Activated naive CD8-positive, alpha-beta T cell treated with anti-CD3 and anti-CD28 coated beads, Interleukin-2, amount 10 ng/mL, durations not matched to agents 7 days and 5 days (primary cell): ENCODE measurements at regions of chr9 and their contacts with region 1.

Region 1: GRCh38 chr9:137240861-137241489 is at the start of gene TUBB4B:
- DNase-seq: peak; percentile 99
- ATAC-seq: peak; percentile 83
- H3K4me3 Mint-ChIP-seq: peak within 1 kb of the TSS; percentile 90
- H3K27ac Mint-ChIP-seq: peak within 1 kb of the TSS; percentile 93
- H3K4me1 Mint-ChIP-seq: peaks cover 24% of the 10 kb centered on the region
- H3K27me3 Mint-ChIP-seq: no peaks in the 10 kb centered on the region
- total RNA-seq, gene TUBB4B: 241 to 249 TPM

Region 2: DNA sequence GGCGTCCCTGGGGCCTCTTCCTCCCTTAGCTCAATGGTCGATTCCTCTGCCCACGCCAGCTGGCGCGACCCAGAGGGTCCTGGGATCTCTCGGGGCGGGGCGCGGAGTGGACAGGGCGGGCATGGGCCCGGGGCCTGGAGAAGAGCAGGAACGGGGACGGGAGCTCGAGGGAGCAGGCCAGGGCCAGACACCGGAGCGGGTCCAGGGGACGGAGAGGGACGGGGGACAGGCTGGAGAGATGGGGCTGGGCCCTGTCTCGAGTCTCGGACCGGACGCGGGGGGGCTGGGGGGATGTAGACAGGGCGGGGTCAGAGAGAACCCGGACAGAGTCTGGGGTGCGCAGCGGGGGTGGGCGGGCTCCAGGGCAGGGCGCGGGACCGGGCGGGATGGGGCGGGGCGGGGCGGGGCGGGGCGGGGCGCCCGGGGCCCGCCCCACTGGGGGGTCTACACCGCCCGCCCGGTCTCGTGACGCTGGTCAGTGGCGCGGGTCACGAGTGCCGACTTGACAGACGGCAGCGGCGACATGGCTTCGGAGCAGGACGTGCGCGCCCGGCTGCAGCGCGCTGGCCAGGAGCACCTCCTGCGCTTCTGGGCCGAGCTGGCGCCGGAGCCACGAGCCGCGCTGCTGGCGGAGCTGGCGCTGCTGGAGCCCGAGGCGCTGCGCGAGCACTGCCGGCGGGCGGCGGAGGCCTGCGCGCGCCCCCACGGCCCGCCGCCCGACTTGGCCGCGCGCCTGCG is 163.8 kb before region 1 on chr9 and contains the start of gene UAP1L1:
- POLR2A ChIA-PET with region 1: interaction called, 11 read pairs
- DNase-seq: peak; percentile 81
- ATAC-seq: peak; percentile 70
- H3K4me3 Mint-ChIP-seq: peak within 1 kb of the TSS; percentile 79
- H3K27ac Mint-ChIP-seq: peak within 1 kb of the TSS; percentile 86
- H3K4me1 Mint-ChIP-seq: peaks cover 5% of the 10 kb centered on the region
- H3K27me3 Mint-ChIP-seq: no peaks in the 10 kb centered on the region
- total RNA-seq, gene UAP1L1: 43.9 to 44.1 TPM

Region 3: DNA sequence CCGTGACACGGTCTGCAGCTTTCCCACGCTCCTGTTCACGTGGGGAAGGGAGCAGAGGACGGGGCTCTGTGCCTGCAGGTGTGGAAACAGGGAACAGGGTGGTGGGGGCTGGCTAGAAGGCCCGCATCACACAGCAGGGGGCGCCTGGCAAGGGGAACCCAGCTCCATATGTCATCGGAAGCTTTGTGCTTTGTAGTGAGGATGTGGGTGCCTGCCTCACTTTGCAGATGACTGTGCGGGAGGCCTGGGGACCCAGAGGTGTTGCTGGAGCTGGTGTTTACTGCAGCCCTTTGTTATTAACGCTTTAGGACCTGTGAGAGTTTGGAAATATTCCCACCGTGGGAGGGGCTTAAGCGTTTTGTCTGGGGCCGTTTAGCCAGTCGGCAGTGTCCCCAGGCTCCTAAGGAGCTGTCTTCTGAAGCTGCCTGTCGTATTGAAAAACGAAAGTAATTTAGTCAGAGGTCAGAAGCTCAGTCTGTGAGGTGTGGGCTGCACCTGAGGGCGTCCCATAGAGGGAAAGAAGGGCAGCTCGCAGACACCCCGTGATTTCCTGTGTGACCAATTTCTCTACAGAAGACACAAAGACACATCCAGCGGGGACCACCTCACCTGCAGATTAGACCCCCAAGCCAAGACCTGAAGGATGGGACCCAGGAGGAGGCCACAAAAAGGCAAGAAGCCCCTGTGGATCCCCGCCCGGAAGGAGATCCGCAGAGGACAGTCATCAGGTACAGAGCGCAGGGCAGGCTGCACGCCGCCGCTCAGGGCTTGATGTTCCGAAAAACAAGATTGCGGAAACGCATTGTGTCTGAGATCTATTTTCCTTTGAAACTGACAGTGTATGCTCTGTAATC is 145.1 kb before region 1 on chr9:
- POLR2A ChIA-PET with region 1: interaction called, 20 read pairs
- DNase-seq: peak; percentile 87
- ATAC-seq: peak; percentile 99
- H3K4me3 Mint-ChIP-seq: peak overlapping the region; percentile 85
- H3K27ac Mint-ChIP-seq: peak overlapping the region; percentile 96
- H3K4me1 Mint-ChIP-seq: peaks cover 16% of the 10 kb centered on the region
- H3K27me3 Mint-ChIP-seq: no peaks in the 10 kb centered on the region

Region 4: DNA sequence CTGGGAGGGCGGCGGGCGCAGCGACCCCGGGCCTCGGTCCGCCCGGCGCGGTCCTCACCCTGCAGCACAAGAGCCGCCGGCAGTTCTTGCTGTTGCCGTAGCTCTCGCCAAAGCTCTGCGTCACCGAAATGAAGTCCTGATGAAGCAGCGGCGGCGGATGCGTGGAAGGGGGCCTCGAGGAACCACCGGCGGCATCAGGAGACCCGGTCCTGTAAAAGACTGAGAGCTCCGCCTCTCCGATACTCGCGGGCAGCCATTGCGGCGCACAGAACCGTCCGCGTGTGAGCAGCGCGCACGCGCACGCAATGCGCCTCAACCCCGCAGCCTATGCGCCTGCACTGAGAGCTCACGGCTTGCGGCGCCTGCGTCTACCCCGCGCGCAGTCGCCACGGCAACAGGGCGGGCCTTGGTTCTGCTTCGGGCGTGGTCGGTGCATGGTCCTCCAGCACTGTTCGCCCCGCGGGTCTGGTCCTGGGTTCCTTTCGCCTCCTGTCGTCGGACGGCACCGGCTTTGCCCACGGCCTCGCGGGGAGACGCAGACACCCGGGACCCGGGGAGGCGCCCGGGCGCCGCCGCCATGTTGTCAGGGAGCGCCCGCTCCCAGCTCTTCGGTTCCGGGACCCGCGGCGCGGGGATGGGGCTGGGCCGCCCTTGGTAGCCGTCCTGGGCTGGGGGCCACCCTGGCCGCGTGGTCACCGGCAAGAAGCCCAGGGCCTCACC is 111.4 kb before region 1 on chr9:
- POLR2A ChIA-PET with region 1: interaction called, 29 read pairs
- DNase-seq: peak; percentile 90
- ATAC-seq: peak; percentile 96
- H3K4me3 Mint-ChIP-seq: peak overlapping the region; percentile 89
- H3K27ac Mint-ChIP-seq: peak overlapping the region; percentile 78
- H3K4me1 Mint-ChIP-seq: peaks cover 26% of the 10 kb centered on the region
- H3K27me3 Mint-ChIP-seq: peaks cover 17% of the 10 kb centered on the region

Region 5: GRCh38 chr9:137200311-137201204 is 40.4 kb before region 1 on chr9 and contains the start of gene TPRN:
- POLR2A ChIA-PET with region 1: interaction called, 15 read pairs
- DNase-seq: peak; percentile 95
- ATAC-seq: peak; percentile 95
- H3K4me3 Mint-ChIP-seq: peak within 1 kb of the TSS; percentile 84
- H3K27ac Mint-ChIP-seq: peak within 1 kb of the TSS; percentile 86
- H3K4me1 Mint-ChIP-seq: peaks cover 20% of the 10 kb centered on the region
- H3K27me3 Mint-ChIP-seq: no peaks in the 10 kb centered on the region
- total RNA-seq, gene TPRN: 11.2 to 14.7 TPM

Region 6: GRCh38 chr9:137254624-137255447 is 13.9 kb after region 1 on chr9 and contains the start of gene NELFB:
- POLR2A ChIA-PET with region 1: interaction called, 171 read pairs
- DNase-seq: peak; percentile 100
- ATAC-seq: peak; percentile 88
- H3K4me3 Mint-ChIP-seq: peak within 1 kb of the TSS; percentile 91
- H3K27ac Mint-ChIP-seq: peak within 1 kb of the TSS; percentile 76
- H3K4me1 Mint-ChIP-seq: peaks cover 5% of the 10 kb centered on the region
- H3K27me3 Mint-ChIP-seq: no peaks in the 10 kb centered on the region
- total RNA-seq, gene NELFB: 58.7 to 63.1 TPM

Region 7: DNA sequence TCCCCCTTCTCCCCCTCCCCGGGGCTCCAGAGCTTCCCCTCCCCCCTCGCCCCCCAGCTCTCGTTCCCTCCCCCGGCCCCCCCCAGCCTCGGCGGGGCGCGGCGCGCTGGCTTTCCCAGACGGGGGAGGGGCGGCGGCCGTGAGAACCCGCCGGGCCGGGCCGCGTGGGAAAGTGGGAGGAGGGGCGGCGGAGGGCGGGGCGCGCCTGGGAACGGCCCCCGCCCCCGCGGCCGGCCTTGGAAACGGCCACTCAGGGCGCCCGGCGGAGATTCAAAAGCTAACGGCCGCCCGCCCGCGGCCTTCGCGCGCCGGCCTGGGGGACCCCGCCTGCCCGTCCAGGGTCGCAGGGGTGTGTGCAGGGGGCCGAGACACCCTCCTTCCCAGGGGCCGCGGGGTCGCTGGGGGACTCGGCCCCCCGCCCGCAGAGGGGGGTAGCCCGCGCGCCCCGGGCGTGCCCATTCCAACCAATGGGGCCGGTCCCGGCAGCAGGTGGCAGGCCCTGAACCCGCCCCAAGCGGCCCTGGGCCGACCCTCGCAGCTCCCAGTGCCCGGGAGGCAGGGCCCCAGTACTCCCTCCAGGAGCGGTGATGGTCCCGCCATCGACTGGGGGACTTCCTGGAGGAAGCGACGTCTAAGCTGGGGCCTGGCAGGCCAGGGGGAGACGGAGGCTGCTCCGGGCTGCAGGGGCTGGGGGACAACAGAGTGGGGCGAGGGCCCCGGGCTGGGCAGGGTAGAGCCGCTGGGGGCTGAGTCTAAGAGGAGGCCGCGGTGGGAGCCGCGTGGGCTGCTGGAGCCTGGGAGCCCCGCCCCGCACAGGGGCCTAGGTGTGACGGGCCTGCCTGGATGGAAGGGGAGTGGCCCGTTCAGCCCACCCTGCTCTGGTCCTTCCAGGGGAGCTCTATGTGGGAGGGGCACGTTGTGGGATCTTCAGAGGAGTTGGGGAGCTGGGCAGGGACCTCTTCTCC is 75.3 kb after region 1 on chr9:
- POLR2A ChIA-PET with region 1: no interaction called
- DNase-seq: peak; percentile 67
- ATAC-seq: peak; percentile 46
- H3K4me3 Mint-ChIP-seq: peak overlapping the region; percentile 61
- H3K27ac Mint-ChIP-seq: peak overlapping the region; percentile 75
- H3K4me1 Mint-ChIP-seq: peaks cover 9% of the 10 kb centered on the region
- H3K27me3 Mint-ChIP-seq: no peaks in the 10 kb centered on the region

Region 8: GRCh38 chr9:137423004-137423874 is 182.3 kb after region 1 on chr9 and contains the starts of genes EXD3 and NOXA1:
- POLR2A ChIA-PET with region 1: interaction called, 11 read pairs
- DNase-seq: peak; percentile 99
- ATAC-seq: peak; percentile 88
- H3K4me3 Mint-ChIP-seq: peak within 1 kb of the TSS; percentile 90
- H3K27ac Mint-ChIP-seq: peak within 1 kb of the TSS; percentile 74
- H3K4me1 Mint-ChIP-seq: peaks cover 3% of the 10 kb centered on the region
- H3K27me3 Mint-ChIP-seq: peaks cover 11% of the 10 kb centered on the region
- total RNA-seq, gene EXD3: 23.4 to 24.7 TPM
- total RNA-seq, gene NOXA1: 2.8 to 3.7 TPM